GM12878 (cell line): ENCODE measurements at regions of chr9 and their contacts with region 1.

Region 1: GRCh38 chr9:38141746-38142591 is 72.9 kb upstream of the SHB start:
- DNase-seq: no peak
- ATAC-seq: peak; percentile 76
- H3K4me3 ChIP-seq: no peak overlapping the region
- H3K27ac ChIP-seq: no peak overlapping the region
- H3K4me1 ChIP-seq: no peaks in the 10 kb centered on the region
- H3K27me3 ChIP-seq: peaks cover 0 to 1% of the 10 kb centered on the region in 2 experiments; a peak in 1 of 4 replicates
- CTCF ChIP-seq: no peak
- EP300 ChIP-seq: 0 out of 4 replicates have a peak, but pooled peaks of 1 of the 2 experiments have one; percentile 39
- POLR2A ChIP-seq: no peak
- RAD21 ChIP-seq: no peak

Region 2: DNA sequence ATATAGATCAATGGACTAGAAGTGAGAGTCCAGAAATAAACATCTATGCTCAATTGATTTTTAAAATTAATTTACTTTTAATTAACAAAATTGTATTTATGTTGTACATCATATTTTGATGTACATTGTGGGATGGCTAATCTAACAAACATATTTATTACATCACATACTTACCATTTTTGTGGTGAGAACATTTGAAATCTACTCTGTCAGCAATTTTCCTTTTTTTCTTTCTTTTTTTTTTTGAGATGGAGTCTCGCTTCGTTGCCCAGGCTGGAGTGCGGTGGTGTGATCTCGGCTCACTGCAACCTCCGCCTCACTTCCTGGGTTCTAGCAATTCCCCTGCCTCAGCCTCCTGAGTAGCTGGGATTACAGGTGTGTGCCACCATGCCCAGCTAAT is 40.5 kb before region 1 on chr9:
- CTCF ChIA-PET with region 1: interaction called, 4 read pairs
- POLR2A ChIA-PET with region 1: interaction called, 7 read pairs
- RAD21 ChIA-PET with region 1: interaction called, 3 read pairs
- SMC1A ChIA-PET with region 1: interaction called, 37 read pairs
- in situ Hi-C with region 1: no loop called
- intact Hi-C with region 1: no loop called
- DNase-seq: no peak
- ATAC-seq: no peak
- H3K4me3 ChIP-seq: no peak overlapping the region
- H3K27ac ChIP-seq: no peak overlapping the region
- H3K4me1 ChIP-seq: no peaks in the 10 kb centered on the region
- H3K27me3 ChIP-seq: no peaks in the 10 kb centered on the region
- CTCF ChIP-seq: no peak
- EP300 ChIP-seq: no peak
- POLR2A ChIP-seq: no peak
- RAD21 ChIP-seq: no peak

Region 3: GRCh38 chr9:38127271-38127882 is 14.6 kb before region 1 on chr9:
- CTCF ChIA-PET with region 1: interaction called, 5 read pairs
- POLR2A ChIA-PET with region 1: interaction called, 8 read pairs
- RAD21 ChIA-PET with region 1: interaction called, 16 read pairs
- SMC1A ChIA-PET with region 1: interaction called, 36 read pairs
- in situ Hi-C with region 1: no loop called
- intact Hi-C with region 1: no loop called
- DNase-seq: no peak
- ATAC-seq: peak; percentile 10; the same call in 1 of the 3 replicates
- H3K4me3 ChIP-seq: no peak overlapping the region
- H3K27ac ChIP-seq: no peak overlapping the region
- H3K4me1 ChIP-seq: no peaks in the 10 kb centered on the region
- H3K27me3 ChIP-seq: peaks cover 0 to 1% of the 10 kb centered on the region in 2 experiments; a peak in 2 of 4 replicates
- CTCF ChIP-seq: no peak
- EP300 ChIP-seq: no peak
- POLR2A ChIP-seq: no peak
- RAD21 ChIP-seq: no peak

Region 4: GRCh38 chr9:38154501-38155421 is 12.8 kb after region 1 on chr9:
- CTCF ChIA-PET with region 1: interaction called, 43 read pairs
- POLR2A ChIA-PET with region 1: interaction called, 6 read pairs
- RAD21 ChIA-PET with region 1: interaction called, 10 read pairs
- SMC1A ChIA-PET with region 1: interaction called, 37 read pairs
- in situ Hi-C with region 1: no loop called
- intact Hi-C with region 1: no loop called
- DNase-seq: no peak
- ATAC-seq: peak; percentile 20; the same call in 1 of the 3 replicates
- H3K4me3 ChIP-seq: no peak overlapping the region
- H3K27ac ChIP-seq: no peak overlapping the region
- H3K4me1 ChIP-seq: no peaks in the 10 kb centered on the region
- H3K27me3 ChIP-seq: no peaks in the 10 kb centered on the region; a peak in 1 of 4 replicates
- CTCF ChIP-seq: no peak
- EP300 ChIP-seq: no peak
- POLR2A ChIP-seq: no peak
- RAD21 ChIP-seq: no peak